ENCODE measurements at regions of chr16 and their contacts with region 1.

Region 1: DNA sequence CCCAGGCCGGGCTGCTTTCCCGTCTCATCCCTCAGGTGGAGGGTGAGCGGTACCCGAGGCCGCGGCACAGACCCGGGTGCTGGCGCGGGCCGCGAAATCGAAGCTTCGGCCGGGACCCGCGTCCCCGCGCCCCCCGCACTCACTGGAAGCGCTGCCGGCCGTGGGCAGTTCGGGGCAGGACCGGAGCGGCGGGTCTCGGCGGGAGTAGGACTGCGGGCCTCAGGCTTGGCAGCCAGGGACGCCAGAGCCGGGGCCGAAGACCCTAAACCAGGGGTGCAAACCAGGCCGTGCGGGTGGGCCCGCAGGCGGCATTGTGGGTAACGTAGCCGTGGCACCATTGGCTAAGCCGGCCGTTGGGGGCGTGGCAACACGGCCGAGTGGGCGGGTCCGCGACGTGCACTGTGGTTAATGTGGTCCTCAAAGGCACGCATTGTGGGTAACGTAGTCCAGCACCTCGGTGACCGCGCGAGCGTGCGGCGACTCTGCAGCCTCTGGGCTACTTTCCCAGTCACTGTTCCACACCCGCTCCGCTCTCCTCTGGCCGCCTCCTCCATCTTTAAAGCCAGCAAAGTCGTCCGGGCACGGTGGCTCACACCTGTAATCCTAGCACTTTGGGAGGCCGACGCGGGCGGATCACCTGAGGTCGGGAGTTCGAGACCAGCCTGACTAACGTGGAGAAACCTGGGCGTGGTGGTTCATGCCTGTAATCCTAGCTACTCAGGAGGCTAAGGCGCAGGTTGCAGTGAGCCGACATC is at the start of gene ZNF500:
- DNase-seq: peak; percentile 87
- H3K4me3 ChIP-seq: peak within 1 kb of the TSS; percentile 97
- CTCF ChIP-seq: no peak

Region 2: DNA sequence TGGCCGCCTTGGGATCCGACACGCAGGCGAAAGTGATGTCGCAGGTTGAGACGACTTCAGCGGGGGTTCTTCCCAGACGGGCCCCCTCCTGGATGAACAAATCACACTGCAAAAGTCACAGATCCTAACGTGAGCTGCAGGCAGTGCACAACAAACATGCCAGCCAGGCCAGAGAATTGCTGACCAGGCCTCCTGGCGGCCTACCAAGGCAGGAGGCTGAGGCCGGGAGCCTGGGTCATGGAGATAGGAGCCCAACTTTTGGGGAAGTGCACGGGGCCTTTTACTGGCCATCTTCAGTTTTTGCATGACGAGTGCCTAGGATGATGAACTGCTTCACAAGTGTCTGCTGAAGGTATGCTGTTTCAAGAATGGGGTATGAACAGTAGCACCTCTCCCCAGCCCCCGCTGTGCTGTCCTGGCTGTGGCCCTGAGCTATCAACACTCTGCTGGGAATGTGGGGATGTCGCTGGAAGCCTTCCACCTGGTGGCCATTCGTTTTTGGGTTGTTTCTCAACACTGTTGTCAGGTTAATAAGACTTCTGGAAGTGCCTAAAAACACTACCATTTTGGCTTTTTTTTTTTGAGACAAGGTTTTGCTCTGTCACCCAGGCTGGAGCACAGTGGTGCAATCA is 47.6 kb after region 1 on chr16:
- in situ Hi-C with region 1: loop called (anchors 5 kb)
- DNase-seq: no peak
- H3K4me3 ChIP-seq: no peak overlapping the region
- CTCF ChIP-seq: no peak

Measured in astrocyte of the cerebellum (primary cell).